ENCODE measurements at regions of chr10 and their contacts with region 1.

Region 1: GRCh38 chr10:129030996-129031843 is 435.8 kb upstream of the MGMT start:
- DNase-seq: peak; percentile 69
- H3K4me3 Mint-ChIP-seq: peak overlapping the region; percentile 36
- H3K27ac Mint-ChIP-seq: no peak overlapping the region
- H3K4me1 Mint-ChIP-seq: peaks cover 35% of the 10 kb centered on the region
- H3K27me3 Mint-ChIP-seq: peaks cover 2% of the 10 kb centered on the region

Region 2: GRCh38 chr10:128047351-128047750 is 983.9 kb before region 1 on chr10:
- CTCF ChIA-PET with region 1: no interaction called
- intact Hi-C with region 1: loop called (anchors 5 kb)
- DNase-seq: peak; percentile 92
- H3K4me3 Mint-ChIP-seq: peak overlapping the region; percentile 84
- H3K27ac Mint-ChIP-seq: peak overlapping the region; percentile 95
- H3K4me1 Mint-ChIP-seq: peaks cover 44% of the 10 kb centered on the region
- H3K27me3 Mint-ChIP-seq: no peaks in the 10 kb centered on the region

Region 3: DNA sequence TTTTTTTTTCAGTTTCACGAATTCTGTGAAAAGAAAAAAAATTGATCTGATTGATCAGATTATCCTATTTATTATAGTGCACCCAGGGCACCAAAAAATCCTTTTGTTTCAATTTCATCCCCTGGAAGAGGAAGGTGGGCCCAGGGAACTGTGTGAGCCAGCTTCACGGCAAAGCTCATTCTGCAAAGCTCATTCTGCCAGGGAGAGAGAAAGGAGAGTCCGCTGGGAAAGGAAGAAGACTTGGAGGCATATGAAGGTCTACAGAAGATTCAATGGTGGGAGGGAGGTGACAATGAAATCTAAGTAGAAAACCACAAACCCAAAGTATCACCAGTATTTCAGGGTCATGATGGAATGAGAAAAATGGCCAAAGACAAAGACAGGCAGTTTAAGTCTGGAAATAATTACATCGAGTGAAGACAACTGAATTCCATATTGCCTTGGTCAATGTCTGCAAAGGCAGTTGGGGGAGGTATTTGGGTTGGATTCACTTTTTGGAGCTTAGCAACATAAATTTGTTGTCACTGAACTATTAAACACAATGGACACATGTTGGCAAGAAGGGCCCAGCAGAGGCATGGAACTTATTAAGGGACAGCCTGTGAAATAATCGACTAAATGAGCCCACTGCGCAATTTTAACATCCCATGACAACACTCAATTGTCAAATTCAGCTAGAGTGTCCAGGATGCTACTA is 317.2 kb before region 1 on chr10:
- CTCF ChIA-PET with region 1: no interaction called
- intact Hi-C with region 1: no loop called
- DNase-seq: no peak
- H3K4me3 Mint-ChIP-seq: no peak overlapping the region
- H3K27ac Mint-ChIP-seq: no peak overlapping the region
- H3K4me1 Mint-ChIP-seq: no peaks in the 10 kb centered on the region
- H3K27me3 Mint-ChIP-seq: peaks cover 17% of the 10 kb centered on the region

Region 4: DNA sequence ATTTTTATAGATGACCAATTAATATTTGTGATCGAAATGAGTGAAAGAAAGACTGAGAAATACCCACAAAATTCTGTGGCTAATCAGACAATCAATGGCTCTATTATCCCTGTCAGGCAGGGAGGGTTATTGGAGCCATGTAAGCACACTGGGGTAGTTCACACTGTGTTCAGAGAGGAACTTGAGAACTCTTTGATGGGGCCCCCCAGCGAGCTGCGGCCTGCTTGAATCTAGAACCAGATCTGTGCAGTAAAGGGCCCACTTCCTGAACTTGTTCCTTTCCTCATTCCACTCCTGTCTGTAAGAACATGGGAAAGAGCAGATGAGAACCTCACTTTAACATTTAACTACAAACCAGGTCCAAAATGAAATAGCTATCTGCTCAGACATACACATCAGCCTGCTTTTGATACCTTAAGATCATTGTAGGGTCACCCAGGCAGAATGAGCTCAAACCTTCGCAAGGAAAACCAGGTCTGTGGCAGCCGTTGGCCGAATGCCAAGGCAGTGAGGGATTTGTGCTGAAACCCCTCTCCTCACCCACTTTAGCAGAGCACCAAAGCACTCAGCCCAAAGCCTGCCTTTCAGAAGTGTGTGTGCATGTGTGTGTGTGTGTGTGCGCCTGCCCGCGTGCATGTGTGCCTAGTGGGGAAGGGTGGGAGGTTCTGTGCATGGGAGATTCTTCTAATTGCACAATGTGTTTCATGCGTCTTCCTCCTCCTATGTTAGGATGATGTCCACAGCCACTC is 70.2 kb after region 1 on chr10:
- CTCF ChIA-PET with region 1: interaction called, 3 read pairs
- intact Hi-C with region 1: loop called (anchors 1 kb)
- DNase-seq: peak; percentile 16
- H3K4me3 Mint-ChIP-seq: no peak overlapping the region
- H3K27ac Mint-ChIP-seq: no peak overlapping the region
- H3K4me1 Mint-ChIP-seq: peaks cover 57% of the 10 kb centered on the region
- H3K27me3 Mint-ChIP-seq: no peaks in the 10 kb centered on the region

Region 5: DNA sequence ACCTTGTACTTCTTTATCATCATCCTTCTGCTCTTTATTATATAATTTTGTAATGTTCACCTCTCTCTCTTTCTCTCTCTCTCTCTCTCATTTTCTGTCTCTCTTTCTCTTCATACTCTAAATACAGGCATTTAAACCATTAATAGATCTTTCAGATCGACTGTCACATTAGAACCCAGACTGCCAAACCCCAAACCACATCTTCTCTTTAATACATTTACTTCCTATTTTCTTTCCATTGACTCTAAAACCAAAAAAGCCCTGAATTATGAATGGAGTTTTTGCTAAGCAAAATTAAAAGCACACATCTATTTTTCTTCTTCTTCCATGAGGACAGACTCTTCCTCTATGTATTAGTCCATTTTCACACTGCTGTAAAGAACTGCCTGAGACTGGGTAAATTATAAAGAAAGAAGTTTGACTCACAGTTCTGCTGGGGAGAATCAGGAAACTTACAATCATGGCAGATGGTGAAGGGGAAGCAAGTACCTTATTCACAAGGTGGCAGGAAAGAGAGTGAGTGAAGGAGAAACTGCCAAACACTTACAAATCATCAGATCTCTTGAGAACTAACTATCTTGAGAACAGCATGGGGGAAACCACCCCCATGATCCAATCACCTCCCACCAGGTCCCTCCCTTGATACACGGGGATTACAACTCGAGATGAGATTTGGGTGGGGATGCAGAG is 163.1 kb after region 1 on chr10:
- CTCF ChIA-PET with region 1: no interaction called
- intact Hi-C with region 1: loop called (anchors 2 kb)
- DNase-seq: peak; percentile 24
- H3K4me3 Mint-ChIP-seq: no peak overlapping the region
- H3K27ac Mint-ChIP-seq: no peak overlapping the region
- H3K4me1 Mint-ChIP-seq: peaks cover 13% of the 10 kb centered on the region
- H3K27me3 Mint-ChIP-seq: peaks cover 5% of the 10 kb centered on the region

Region 6: DNA sequence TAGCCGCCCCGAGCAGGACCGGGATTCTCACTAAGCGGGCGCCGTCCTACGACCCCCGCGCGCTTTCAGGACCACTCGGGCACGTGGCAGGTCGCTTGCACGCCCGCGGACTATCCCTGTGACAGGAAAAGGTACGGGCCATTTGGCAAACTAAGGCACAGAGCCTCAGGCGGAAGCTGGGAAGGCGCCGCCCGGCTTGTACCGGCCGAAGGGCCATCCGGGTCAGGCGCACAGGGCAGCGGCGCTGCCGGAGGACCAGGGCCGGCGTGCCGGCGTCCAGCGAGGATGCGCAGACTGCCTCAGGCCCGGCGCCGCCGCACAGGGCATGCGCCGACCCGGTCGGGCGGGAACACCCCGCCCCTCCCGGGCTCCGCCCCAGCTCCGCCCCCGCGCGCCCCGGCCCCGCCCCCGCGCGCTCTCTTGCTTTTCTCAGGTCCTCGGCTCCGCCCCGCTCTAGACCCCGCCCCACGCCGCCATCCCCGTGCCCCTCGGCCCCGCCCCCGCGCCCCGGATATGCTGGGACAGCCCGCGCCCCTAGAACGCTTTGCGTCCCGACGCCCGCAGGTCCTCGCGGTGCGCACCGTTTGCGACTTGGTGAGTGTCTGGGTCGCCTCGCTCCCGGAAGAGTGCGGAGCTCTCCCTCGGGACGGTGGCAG is 435.6 kb after region 1 on chr10 and contains the start of gene MGMT:
- CTCF ChIA-PET with region 1: no interaction called
- intact Hi-C with region 1: loop called (anchors 2 kb)
- DNase-seq: peak; percentile 98
- H3K4me3 Mint-ChIP-seq: peak within 1 kb of the TSS; percentile 78
- H3K27ac Mint-ChIP-seq: peak within 1 kb of the TSS; percentile 70
- H3K4me1 Mint-ChIP-seq: peaks cover 14% of the 10 kb centered on the region
- H3K27me3 Mint-ChIP-seq: no peaks in the 10 kb centered on the region
- total RNA-seq, gene MGMT: 24.6 to 26.0 TPM

Region 7: DNA sequence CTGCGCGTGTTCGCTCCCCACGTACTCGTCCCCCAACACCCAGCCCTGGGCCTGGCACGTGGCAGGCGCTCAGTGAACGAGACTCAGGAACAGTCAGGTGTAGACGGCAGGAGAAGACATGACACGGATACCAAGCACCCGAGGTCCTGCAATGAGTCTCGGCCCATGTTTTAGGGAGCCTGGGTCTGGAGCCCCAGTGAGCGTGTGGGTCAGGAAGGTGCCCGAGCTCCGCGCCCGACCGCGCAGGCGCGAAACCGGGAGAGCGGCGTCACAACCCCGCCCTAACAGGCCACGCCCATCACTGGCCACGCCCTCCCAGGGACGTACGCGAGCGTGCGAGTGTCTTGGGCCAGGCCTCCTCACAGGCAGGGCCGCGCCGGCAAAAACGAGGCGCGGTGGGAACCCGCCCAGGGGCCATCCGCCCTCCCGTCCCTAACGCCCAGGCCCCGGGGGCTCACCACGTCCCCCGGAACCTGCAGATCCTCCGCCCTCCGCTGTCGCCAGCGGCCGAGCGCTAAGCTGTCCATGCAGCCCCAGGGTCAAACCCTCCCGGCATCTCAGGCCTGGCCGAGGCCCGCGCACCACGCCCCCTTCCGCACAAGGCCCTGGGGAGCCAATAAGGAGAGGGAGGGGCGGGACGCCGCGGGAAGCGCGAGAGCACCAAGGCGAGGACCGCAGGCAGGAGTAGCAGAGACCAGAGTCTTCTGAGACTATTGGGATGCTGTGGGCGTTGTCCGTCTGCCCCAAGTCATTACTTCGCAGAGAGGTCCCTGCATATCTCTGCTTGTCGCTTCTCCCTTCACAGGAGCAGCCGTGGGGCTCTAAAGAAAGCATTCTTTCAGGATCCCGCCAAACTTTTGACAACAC is 1079.3 kb after region 1 on chr10 and contains the start of gene C10orf143:
- CTCF ChIA-PET with region 1: interaction called, 3 read pairs
- intact Hi-C with region 1: loop called (anchors 1 kb)
- DNase-seq: peak; percentile 96
- H3K4me3 Mint-ChIP-seq: peak within 1 kb of the TSS; percentile 83
- H3K27ac Mint-ChIP-seq: peak within 1 kb of the TSS; percentile 99
- H3K4me1 Mint-ChIP-seq: peaks cover 45% of the 10 kb centered on the region
- H3K27me3 Mint-ChIP-seq: no peaks in the 10 kb centered on the region
- total RNA-seq, gene C10orf143: 3.3 to 3.5 TPM

Region 8: GRCh38 chr10:130179640-130180039 is 1148.4 kb after region 1 on chr10:
- CTCF ChIA-PET with region 1: no interaction called
- intact Hi-C with region 1: loop called (anchors 1 kb)
- DNase-seq: peak; percentile 70
- H3K4me3 Mint-ChIP-seq: no peak overlapping the region
- H3K27ac Mint-ChIP-seq: no peak overlapping the region
- H3K4me1 Mint-ChIP-seq: peaks cover 5% of the 10 kb centered on the region
- H3K27me3 Mint-ChIP-seq: no peaks in the 10 kb centered on the region